PC-3 (cell line): ENCODE measurements at regions of chr1 and their contacts with region 1.

Region 1: DNA sequence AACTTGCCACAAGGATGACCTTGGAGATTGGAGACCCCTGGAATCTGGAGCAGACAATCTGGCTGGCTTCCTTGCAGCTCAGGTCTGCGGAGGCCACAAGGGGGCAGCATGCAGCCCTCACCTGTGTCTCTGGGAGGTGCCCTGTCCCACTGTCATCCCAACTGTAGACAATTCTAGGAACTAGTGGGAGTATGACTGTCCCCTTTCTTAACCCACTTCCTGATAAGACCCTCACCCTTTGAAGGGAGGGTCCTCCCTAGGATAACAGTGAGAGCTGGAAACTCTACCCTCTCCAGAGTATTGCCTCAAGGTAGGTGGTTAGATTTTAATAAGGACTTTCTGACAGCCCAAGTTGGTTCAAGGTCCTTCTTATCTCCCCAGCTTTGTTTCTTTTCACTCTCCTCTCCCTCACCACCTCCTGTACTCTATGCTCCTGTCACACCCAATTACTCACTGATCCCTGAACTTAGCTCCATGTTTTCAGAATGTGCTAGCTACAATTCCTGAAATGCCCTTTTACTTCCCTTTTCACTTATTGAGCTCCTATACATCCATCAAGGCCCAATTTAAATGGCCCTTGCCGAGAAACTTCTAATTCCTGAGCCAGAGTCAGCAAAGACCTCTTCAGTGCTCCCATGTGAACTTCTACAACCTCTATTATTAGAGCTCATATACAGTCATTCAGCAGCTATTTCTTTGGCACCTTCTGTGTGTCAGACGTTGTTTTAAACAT is 9.2 kb upstream of the KCNQ4 start:
- DNase-seq: peak; percentile 67
- ATAC-seq: peak; percentile 72
- H3K4me3 ChIP-seq: no peak overlapping the region
- H3K27ac ChIP-seq: no peak overlapping the region
- H3K4me1 ChIP-seq: no peaks in the 10 kb centered on the region
- H3K27me3 ChIP-seq: no peaks in the 10 kb centered on the region
- CTCF ChIP-seq: peak; percentile 92

Region 2: GRCh38 chr1:40438391-40439015 is 335.9 kb before region 1 on chr1:
- CTCF ChIA-PET with region 1: no interaction called
- POLR2A ChIA-PET with region 1: no interaction called
- intact Hi-C with region 1: no loop called
- DNase-seq: peak; percentile 55
- ATAC-seq: peak; percentile 60; the same call in 1 of the 2 replicates
- H3K4me3 ChIP-seq: no peak overlapping the region
- H3K27ac ChIP-seq: no peak overlapping the region
- H3K4me1 ChIP-seq: no peaks in the 10 kb centered on the region
- H3K27me3 ChIP-seq: no peaks in the 10 kb centered on the region
- CTCF ChIP-seq: peak; percentile 81

Region 3: GRCh38 chr1:40612345-40612831 is 162.0 kb before region 1 on chr1:
- CTCF ChIA-PET with region 1: no interaction called
- POLR2A ChIA-PET with region 1: no interaction called
- intact Hi-C with region 1: loop called (anchors 2 kb)
- DNase-seq: peak; percentile 85
- ATAC-seq: peak; percentile 99
- H3K4me3 ChIP-seq: peak overlapping the region; percentile 55; the same call in 1 of the 2 replicates
- H3K27ac ChIP-seq: no peak overlapping the region
- H3K4me1 ChIP-seq: no peaks in the 10 kb centered on the region
- H3K27me3 ChIP-seq: no peaks in the 10 kb centered on the region
- CTCF ChIP-seq: peak; percentile 92